Ovary (tissue), 10 donors: ENCODE measurements at regions of chr17 and their contacts with region 1.

Region 1: GRCh38 chr17:56274491-56274890 is 121.2 kb downstream of the ANKFN1 start:
- DNase-seq: no peak
- H3K4me3 ChIP-seq: no peak overlapping the region
- H3K27ac ChIP-seq: no peak overlapping the region
- H3K4me1 ChIP-seq: no peaks in the 10 kb centered on the region
- H3K27me3 ChIP-seq: no peaks in the 10 kb centered on the region
- CTCF ChIP-seq: no peak
- EP300 ChIP-seq: no peak
- POLR2A ChIP-seq: no peak

Region 2: GRCh38 chr17:56247816-56248215 is 26.7 kb before region 1 on chr17:
- intact Hi-C with region 1: loop called in 1 of 4 experiments (anchors 1 kb)
- DNase-seq: no peak
- H3K4me3 ChIP-seq: no peak overlapping the region
- H3K27ac ChIP-seq: no peak overlapping the region
- H3K4me1 ChIP-seq: no peaks in the 10 kb centered on the region
- H3K27me3 ChIP-seq: no peaks in the 10 kb centered on the region
- CTCF ChIP-seq: no peak
- EP300 ChIP-seq: no peak
- POLR2A ChIP-seq: no peak

Region 3: GRCh38 chr17:56406794-56407193 is 132.3 kb after region 1 on chr17:
- intact Hi-C with region 1: no loop called
- DNase-seq: no peak
- H3K4me3 ChIP-seq: no peak overlapping the region
- H3K27ac ChIP-seq: no peak overlapping the region
- H3K4me1 ChIP-seq: no peaks in the 10 kb centered on the region
- H3K27me3 ChIP-seq: no peaks in the 10 kb centered on the region
- CTCF ChIP-seq: no peak
- EP300 ChIP-seq: no peak
- POLR2A ChIP-seq: no peak

Region 4: DNA sequence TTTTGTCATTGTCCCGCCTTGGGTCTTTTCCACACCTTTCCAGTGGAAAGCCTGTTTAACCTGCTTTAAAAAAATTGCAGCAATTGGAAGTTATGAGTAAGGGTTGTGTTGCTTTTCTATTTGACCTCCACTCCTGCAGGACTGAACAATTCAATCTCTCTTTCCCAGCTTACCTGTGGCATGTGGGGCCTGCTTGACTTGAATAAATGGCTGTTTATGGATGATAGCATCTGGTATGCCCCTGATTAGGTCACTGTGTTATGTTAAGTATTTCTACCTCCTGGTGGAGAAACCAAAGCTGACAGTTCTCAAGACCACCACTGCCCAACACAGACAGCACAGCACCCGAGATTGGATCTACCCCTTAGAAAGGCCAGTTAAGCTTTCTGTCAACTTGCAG is 254.2 kb after region 1 on chr17:
- intact Hi-C with region 1: no loop called
- DNase-seq: no peak
- H3K4me3 ChIP-seq: no peak overlapping the region
- H3K27ac ChIP-seq: no peak overlapping the region
- H3K4me1 ChIP-seq: no peaks in the 10 kb centered on the region
- H3K27me3 ChIP-seq: no peaks in the 10 kb centered on the region
- CTCF ChIP-seq: no peak
- EP300 ChIP-seq: no peak
- POLR2A ChIP-seq: no peak